ENCODE measurements at regions of chr9 and their contacts with region 1.

Region 1: DNA sequence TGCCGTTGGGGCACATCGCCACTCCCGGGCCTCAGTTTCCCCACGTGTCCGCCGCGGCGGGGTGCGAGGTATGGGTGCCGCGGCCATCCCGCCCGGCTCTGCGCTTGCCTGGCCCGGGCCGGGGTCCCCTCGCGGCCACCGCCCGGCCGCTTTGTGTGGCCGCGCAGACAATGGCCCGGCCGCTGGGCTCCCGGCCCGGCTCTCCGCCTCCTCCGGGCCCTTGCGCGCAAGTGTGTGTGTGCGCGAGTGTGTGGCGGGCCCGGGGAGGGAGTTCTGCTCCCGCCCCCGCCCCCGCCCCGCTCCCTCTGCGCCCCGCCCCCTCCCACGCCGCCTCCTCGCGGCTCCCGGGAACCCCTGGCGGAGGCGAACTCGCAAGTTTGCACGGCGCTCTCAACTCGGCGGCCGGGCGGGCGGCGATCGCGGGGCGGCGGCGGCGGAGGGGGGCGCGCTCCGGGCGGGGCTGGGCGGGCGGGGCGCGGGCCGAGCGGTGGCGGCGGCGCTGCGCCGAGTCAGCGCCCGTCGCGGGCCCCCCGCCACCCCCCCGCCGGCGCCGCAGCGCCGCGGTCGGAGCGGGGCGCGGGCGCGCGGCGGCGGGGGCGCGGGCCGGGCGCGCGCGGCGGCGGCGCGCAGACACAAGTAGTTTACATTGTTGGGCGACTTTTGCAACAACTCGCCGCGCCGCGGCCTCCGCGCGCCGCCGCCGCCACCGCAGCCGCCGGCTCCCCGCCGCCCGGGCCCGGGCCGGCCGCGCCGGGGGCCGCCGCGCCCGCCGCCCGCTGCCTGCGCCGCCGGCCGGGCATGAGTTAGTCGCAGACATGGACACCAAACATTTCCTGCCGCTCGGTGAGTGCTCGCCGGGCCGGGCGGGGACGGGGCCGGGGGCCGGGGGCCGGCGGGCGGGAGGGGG is at the start of gene RXRA:
- DNase-seq: peak; percentile 85 to 89 (median 87)
- H3K4me3 ChIP-seq: peak within 1 kb of the TSS; percentile 35 to 89 (median 58)
- H3K27ac ChIP-seq: peak within 1 kb of the TSS; percentile 81 to 99 (median 94)
- H3K4me1 ChIP-seq: peaks cover 39% of the 10 kb centered on the region in 2 donors
- H3K27me3 ChIP-seq: no peaks in the 10 kb centered on the region
- CTCF ChIP-seq: peak in 2 of 6 experiments; percentile 18 to 28
- POLR2A ChIP-seq: peak; percentile 86 to 91
- total RNA-seq, gene RXRA: 5.5 to 114 (median 85.2) TPM

Region 2: GRCh38 chr9:134171316-134172197 is 154.5 kb before region 1 on chr9:
- intact Hi-C with region 1: loop called (anchors 5 kb)
- DNase-seq: peak in 6 of 7 donors; percentile 50 to 84 (median 68)
- H3K4me3 ChIP-seq: no peak overlapping the region
- H3K27ac ChIP-seq: peak overlapping the region in 2 of 5 donors; percentile 47 to 70
- H3K4me1 ChIP-seq: peaks cover 9 to 32% of the 10 kb centered on the region in 2 donors
- H3K27me3 ChIP-seq: no peaks in the 10 kb centered on the region
- CTCF ChIP-seq: no peak
- POLR2A ChIP-seq: peak in 1 of 2 donors; percentile 10

Region 3: DNA sequence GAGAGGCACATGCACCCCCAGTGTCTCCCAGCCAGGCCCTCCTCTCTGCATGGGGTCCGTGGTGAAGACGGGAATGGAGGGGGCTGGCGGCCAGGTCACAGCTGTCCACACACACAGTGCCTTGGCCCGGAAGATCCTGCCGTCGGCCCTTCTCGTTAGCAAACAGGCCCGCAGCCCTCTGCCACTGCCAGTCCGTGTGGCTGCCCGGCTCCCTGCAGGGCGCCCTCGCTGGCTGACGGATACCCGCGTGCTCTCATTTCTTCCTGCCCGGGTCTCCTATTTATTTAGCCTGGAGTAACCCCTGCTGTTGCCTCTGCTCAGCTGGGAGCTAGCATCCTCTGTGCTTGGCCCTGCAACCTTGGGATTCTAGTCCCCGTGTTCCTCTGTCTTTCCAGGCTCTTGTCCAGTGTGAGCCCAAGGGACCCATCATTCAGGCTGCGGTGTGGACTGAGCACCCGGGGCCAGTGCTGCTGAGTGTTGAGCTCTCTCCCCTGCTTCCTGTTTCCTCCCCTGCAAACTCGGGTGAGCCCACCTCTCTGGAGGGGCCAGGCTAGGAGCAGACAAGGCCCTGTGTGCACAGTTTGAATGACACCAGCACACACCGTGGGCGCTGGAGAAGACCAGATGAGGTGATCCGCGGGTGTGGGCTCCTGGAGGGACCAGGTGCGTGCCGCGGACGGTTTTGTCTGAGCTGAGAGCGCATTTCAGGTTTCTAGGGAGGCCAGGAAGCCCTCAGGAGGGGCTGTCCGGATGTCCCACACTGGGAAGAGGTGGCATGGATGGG is 147.1 kb before region 1 on chr9:
- intact Hi-C with region 1: loop called (anchors 5 kb)
- DNase-seq: peak in 6 of 7 donors; percentile 48 to 86 (median 63)
- H3K4me3 ChIP-seq: no peak overlapping the region
- H3K27ac ChIP-seq: peak overlapping the region in 4 of 5 donors; percentile 26 to 86 (median 50)
- H3K4me1 ChIP-seq: peaks cover 9 to 27% of the 10 kb centered on the region in 2 donors
- H3K27me3 ChIP-seq: no peaks in the 10 kb centered on the region
- CTCF ChIP-seq: no peak
- POLR2A ChIP-seq: no peak

Region 4: GRCh38 chr9:134371731-134372130 is 45.7 kb after region 1 on chr9:
- intact Hi-C with region 1: loop called (anchors 5 kb)
- DNase-seq: peak; percentile 65 to 89 (median 83)
- H3K4me3 ChIP-seq: no peak overlapping the region
- H3K27ac ChIP-seq: peak overlapping the region; percentile 84 to 99 (median 93)
- H3K4me1 ChIP-seq: peaks cover 89 to 92% of the 10 kb centered on the region in 2 donors
- H3K27me3 ChIP-seq: no peaks in the 10 kb centered on the region
- CTCF ChIP-seq: no peak
- POLR2A ChIP-seq: no peak

Region 5: GRCh38 chr9:134434894-134435506 is 108.9 kb after region 1 on chr9:
- intact Hi-C with region 1: loop called (anchors 5 kb)
- DNase-seq: peak; percentile 95 to 99 (median 98)
- H3K4me3 ChIP-seq: peak overlapping the region in 1 of 4 donors; percentile 20
- H3K27ac ChIP-seq: peak overlapping the region; percentile 26 to 91 (median 80)
- H3K4me1 ChIP-seq: peaks cover 23 to 70% of the 10 kb centered on the region in 2 donors
- H3K27me3 ChIP-seq: no peaks in the 10 kb centered on the region
- CTCF ChIP-seq: no peak
- POLR2A ChIP-seq: no peak